PC-3 (cell line): ENCODE measurements at regions of chr7 and their contacts with region 1.

Region 1: GRCh38 chr7:4700577-4701235 is 18.6 kb downstream of the FOXK1 start:
- DNase-seq: no peak
- ATAC-seq: no peak
- H3K4me3 ChIP-seq: no peak overlapping the region
- H3K27ac ChIP-seq: no peak overlapping the region
- H3K4me1 ChIP-seq: no peaks in the 10 kb centered on the region
- H3K27me3 ChIP-seq: no peaks in the 10 kb centered on the region
- CTCF ChIP-seq: no peak

Region 2: GRCh38 chr7:3636131-3636860 is 1064.4 kb before region 1 on chr7:
- CTCF ChIA-PET with region 1: no interaction called
- POLR2A ChIA-PET with region 1: interaction called, 22 read pairs
- intact Hi-C with region 1: no loop called
- DNase-seq: peak; percentile 5
- ATAC-seq: no peak
- H3K4me3 ChIP-seq: no peak overlapping the region
- H3K27ac ChIP-seq: no peak overlapping the region
- H3K4me1 ChIP-seq: no peaks in the 10 kb centered on the region
- H3K27me3 ChIP-seq: no peaks in the 10 kb centered on the region
- CTCF ChIP-seq: no peak